Activated CD4-positive, alpha-beta memory T cell treated with anti-CD3 and anti-CD28 coated beads for 36 hours (primary cell): ENCODE measurements at regions of chr4 and their contacts with region 1.

Region 1: GRCh38 chr4:48167538-48168263 is 33.7 kb upstream of the TXK start:
- DNase-seq: no peak
- H3K4me3 Mint-ChIP-seq: no peak overlapping the region
- H3K27ac Mint-ChIP-seq: no peak overlapping the region
- H3K4me1 Mint-ChIP-seq: peaks cover 12% of the 10 kb centered on the region
- H3K27me3 Mint-ChIP-seq: no peaks in the 10 kb centered on the region

Region 2: DNA sequence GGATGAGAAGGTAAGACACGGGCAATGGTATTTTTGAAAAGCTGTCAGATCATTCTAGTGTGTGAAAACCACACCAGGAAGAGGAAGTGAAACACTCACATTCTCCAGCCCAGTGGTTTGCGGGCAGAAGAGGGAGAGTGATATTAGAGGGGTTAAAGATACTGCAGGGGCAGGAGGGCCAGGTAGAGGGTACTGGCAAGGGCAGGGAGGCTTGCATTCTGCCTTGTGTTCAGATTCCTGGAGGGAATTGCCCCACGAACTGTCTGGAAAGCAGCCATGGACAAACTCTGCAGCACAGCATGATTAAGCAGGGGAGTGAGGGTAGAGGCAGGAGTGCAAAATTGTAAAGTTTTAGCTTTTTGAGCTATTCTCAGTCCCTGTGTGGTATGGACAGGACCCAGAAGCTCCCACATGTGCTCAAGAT is 120.3 kb before region 1 on chr4:
- CTCF ChIA-PET with region 1: no interaction called
- POLR2A ChIA-PET with region 1: no interaction called
- intact Hi-C with region 1: no loop called
- DNase-seq: peak; percentile 91
- H3K4me3 Mint-ChIP-seq: no peak overlapping the region
- H3K27ac Mint-ChIP-seq: peak overlapping the region; percentile 15
- H3K4me1 Mint-ChIP-seq: peaks cover 52% of the 10 kb centered on the region
- H3K27me3 Mint-ChIP-seq: peaks cover 34% of the 10 kb centered on the region

Region 3: DNA sequence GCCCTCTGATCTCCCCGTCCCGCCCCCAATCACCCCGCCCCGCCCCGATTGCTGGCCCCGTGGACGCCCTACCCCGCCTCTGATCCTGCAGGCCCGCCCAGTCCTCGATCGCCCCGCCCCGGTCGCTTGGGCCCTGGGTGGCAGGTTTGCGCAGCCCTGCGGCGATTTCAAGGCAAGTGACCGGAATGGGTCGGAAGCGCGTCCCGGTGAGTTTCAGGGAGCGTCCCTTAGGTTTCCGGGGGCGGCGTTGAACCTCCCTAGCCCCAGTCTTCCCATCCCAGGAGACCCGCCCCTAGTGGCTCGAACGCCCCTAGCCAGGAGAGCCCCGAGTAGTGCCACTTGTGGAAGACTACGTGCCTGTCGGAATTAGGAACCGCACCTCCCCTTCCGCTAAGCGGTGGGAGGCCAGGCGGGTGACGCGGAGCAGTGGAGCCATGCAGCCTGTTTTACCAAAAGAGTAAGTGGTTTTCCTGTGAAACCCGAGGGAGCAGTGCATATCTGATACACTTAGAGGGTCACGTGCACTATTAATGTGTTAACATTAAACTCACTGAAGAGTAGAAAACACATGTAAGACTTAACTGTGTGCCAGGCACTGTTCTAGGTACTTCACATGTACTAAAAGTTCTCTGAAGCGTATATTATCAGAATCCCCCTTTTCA is 102.3 kb after region 1 on chr4:
- CTCF ChIA-PET with region 1: no interaction called
- POLR2A ChIA-PET with region 1: no interaction called
- intact Hi-C with region 1: loop called (anchors 5 kb)
- DNase-seq: peak; percentile 95
- H3K4me3 Mint-ChIP-seq: peak overlapping the region; percentile 91
- H3K27ac Mint-ChIP-seq: peak overlapping the region; percentile 75
- H3K4me1 Mint-ChIP-seq: peaks cover 23% of the 10 kb centered on the region
- H3K27me3 Mint-ChIP-seq: no peaks in the 10 kb centered on the region